ENCODE measurements at regions of chr11 and their contacts with region 1.

Region 1: GRCh38 chr11:129090056-129090455 is 102.1 kb downstream of the ARHGAP32 start:
- DNase-seq: no peak
- H3K4me3 ChIP-seq: no peak overlapping the region
- H3K27ac ChIP-seq: no peak overlapping the region
- H3K4me1 ChIP-seq: no peaks in the 10 kb centered on the region
- H3K27me3 ChIP-seq: no peaks in the 10 kb centered on the region
- CTCF ChIP-seq: no peak

Region 2: GRCh38 chr11:128095466-128095981 is 994.5 kb before region 1 on chr11:
- CTCF ChIA-PET with region 1: no interaction called
- POLR2A ChIA-PET with region 1: no interaction called
- intact Hi-C with region 1: no loop called
- DNase-seq: peak; percentile 15
- H3K4me3 ChIP-seq: no peak overlapping the region
- H3K27ac ChIP-seq: no peak overlapping the region
- H3K4me1 ChIP-seq: no peaks in the 10 kb centered on the region
- H3K27me3 ChIP-seq: peaks cover 11% of the 10 kb centered on the region
- CTCF ChIP-seq: peak; percentile 28; the same call in 1 of the 2 replicates

Region 3: GRCh38 chr11:129035244-129035643 is 54.8 kb before region 1 on chr11:
- CTCF ChIA-PET with region 1: no interaction called
- POLR2A ChIA-PET with region 1: no interaction called
- intact Hi-C with region 1: no loop called
- DNase-seq: no peak
- H3K4me3 ChIP-seq: no peak overlapping the region
- H3K27ac ChIP-seq: no peak overlapping the region
- H3K4me1 ChIP-seq: no peaks in the 10 kb centered on the region
- H3K27me3 ChIP-seq: no peaks in the 10 kb centered on the region
- CTCF ChIP-seq: no peak

Region 4: DNA sequence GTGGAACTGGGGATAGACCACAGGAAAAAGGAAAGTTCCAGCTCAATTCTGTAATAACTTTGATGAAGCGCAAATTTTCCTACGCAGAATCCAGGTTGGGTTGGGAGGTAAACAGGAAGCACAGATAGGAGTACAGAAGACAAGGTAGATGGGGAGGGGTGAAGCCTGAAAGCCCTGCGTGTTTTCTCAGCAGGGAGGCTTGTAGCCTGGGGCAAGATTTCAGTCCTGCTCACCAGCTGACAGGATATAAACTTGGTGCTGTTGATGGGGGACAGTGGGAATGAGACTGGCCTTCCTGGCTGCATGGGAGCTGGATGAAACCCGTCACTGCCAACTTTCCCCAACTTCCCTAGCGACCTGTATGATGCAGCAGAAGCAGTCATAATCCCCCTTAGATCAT is 12.9 kb before region 1 on chr11:
- CTCF ChIA-PET with region 1: no interaction called
- POLR2A ChIA-PET with region 1: interaction called, 3 read pairs
- intact Hi-C with region 1: loop called (anchors 1 kb)
- DNase-seq: peak; percentile 21
- H3K4me3 ChIP-seq: no peak overlapping the region
- H3K27ac ChIP-seq: no peak overlapping the region
- H3K4me1 ChIP-seq: no peaks in the 10 kb centered on the region
- H3K27me3 ChIP-seq: no peaks in the 10 kb centered on the region
- CTCF ChIP-seq: no peak